ENCODE measurements at regions of chr16 and their contacts with region 1.

Region 1: DNA sequence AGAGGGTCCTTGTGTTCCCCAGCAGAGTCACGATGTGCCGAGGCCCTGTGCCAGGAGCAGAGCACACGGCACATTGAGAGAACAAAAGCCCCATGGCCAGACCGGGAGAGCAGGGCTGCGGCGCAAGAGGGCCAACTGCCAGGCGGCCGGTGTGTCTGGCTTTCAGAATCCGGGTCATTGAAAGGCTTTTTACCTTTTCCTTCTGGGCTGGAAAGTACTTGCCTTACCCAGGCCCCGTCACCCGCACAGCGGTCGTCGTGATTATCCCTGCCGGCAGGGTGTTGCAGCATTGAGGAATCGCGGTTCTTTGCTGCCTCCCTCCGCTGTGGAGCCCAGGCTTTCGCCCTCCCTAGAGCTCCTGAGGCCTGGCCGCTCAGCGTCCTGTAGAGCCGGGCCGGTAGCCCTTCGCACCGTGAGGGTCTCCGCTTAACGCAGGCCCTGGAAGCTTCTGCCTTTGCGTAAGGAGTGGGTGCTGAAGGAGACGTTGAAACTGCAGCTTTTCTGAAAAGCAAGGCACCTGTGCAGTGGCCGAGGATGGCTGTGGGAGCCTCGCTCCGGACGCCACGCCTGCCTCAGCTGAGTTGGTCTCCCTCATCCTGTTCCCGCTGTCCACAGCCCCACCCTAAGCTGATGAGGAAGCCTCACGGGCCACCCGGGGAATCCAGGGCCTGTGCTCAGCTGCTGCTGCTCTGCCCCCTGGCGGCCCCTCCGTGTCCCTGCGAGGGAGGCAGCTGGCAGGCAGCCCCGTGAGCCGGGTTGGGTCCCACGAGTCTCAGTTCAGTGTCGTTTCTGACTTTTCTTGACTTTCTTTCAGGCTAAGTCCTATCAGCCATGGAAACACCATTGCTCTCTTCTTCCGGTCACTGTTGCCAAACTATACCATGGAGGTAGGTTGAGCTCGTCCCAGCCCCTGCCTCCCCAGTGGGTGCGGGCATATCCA is 8.6 kb upstream of the MC1R start:
- DNase-seq: peak; percentile 77
- H3K4me3 Mint-ChIP-seq: no peak overlapping the region
- H3K27ac Mint-ChIP-seq: no peak overlapping the region
- H3K4me1 Mint-ChIP-seq: peaks cover 10% of the 10 kb centered on the region
- H3K27me3 Mint-ChIP-seq: no peaks in the 10 kb centered on the region

Region 2: DNA sequence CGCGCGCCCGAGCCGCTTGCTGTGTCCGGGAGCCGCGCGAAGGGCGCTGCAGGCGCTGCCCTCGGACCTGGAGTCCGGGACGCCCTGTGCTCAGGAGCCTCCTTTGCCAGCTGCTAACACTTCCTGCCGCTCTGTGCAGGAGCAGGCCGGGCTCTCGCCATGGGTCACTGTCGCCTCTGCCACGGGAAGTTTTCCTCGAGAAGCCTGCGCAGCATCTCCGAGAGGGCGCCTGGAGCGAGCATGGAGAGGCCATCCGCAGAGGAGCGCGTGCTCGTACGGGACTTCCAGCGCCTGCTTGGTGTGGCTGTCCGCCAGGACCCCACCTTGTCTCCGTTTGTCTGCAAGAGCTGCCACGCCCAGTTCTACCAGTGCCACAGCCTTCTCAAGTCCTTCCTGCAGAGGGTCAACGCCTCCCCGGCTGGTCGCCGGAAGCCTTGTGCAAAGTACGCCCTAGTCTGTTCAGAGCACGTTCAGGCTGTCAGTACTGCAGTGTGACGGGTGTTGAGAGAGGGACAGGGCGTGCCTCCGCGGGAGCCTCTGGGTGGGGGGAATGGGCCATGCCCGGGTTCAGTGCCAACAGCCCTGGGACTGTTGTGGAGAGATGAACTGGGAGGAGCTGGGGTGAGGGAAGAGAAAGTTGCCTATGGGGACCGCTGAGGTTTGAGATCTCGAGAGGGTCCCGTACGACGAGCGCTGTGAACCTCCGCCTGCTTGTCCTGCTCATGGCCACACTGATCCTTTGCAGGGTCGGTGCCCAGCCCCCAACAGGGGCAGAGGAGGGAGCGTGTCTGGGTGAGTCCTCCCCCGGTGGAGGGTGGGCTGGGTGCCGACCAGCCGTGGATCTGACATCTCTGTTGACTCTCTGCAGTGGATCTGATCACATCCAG is 187.4 kb before region 1 on chr16:
- CTCF ChIA-PET with region 1: no interaction called
- POLR2A ChIA-PET with region 1: no interaction called
- DNase-seq: peak; percentile 90
- H3K4me3 Mint-ChIP-seq: peak overlapping the region; percentile 96
- H3K27ac Mint-ChIP-seq: peak overlapping the region; percentile 100
- H3K4me1 Mint-ChIP-seq: peaks cover 49% of the 10 kb centered on the region
- H3K27me3 Mint-ChIP-seq: no peaks in the 10 kb centered on the region

Region 3: GRCh38 chr16:89853306-89853993 is 56.6 kb before region 1 on chr16:
- CTCF ChIA-PET with region 1: no interaction called
- POLR2A ChIA-PET with region 1: no interaction called
- DNase-seq: no peak
- H3K4me3 Mint-ChIP-seq: no peak overlapping the region
- H3K27ac Mint-ChIP-seq: no peak overlapping the region
- H3K4me1 Mint-ChIP-seq: no peaks in the 10 kb centered on the region
- H3K27me3 Mint-ChIP-seq: no peaks in the 10 kb centered on the region

Region 4: GRCh38 chr16:89898201-89898967 is 11.7 kb before region 1 on chr16:
- CTCF ChIA-PET with region 1: interaction called, 10 read pairs
- POLR2A ChIA-PET with region 1: interaction called, 3 read pairs
- DNase-seq: no peak
- H3K4me3 Mint-ChIP-seq: no peak overlapping the region
- H3K27ac Mint-ChIP-seq: no peak overlapping the region
- H3K4me1 Mint-ChIP-seq: no peaks in the 10 kb centered on the region
- H3K27me3 Mint-ChIP-seq: no peaks in the 10 kb centered on the region

Region 5: GRCh38 chr16:89934611-89935553 is 24.8 kb after region 1 on chr16:
- CTCF ChIA-PET with region 1: no interaction called
- POLR2A ChIA-PET with region 1: no interaction called
- DNase-seq: no peak
- H3K4me3 Mint-ChIP-seq: no peak overlapping the region
- H3K27ac Mint-ChIP-seq: no peak overlapping the region
- H3K4me1 Mint-ChIP-seq: no peaks in the 10 kb centered on the region
- H3K27me3 Mint-ChIP-seq: no peaks in the 10 kb centered on the region